AG04449 (cell line): ENCODE measurements at regions of chr16 and their contacts with region 1.

Region 1: GRCh38 chr16:73064205-73064988 is 16.5 kb upstream of the ZFHX3 start:
- DNase-seq: peak; percentile 51
- H3K4me3 ChIP-seq: peak overlapping the region; percentile 42
- CTCF ChIP-seq: no peak

Region 2: DNA sequence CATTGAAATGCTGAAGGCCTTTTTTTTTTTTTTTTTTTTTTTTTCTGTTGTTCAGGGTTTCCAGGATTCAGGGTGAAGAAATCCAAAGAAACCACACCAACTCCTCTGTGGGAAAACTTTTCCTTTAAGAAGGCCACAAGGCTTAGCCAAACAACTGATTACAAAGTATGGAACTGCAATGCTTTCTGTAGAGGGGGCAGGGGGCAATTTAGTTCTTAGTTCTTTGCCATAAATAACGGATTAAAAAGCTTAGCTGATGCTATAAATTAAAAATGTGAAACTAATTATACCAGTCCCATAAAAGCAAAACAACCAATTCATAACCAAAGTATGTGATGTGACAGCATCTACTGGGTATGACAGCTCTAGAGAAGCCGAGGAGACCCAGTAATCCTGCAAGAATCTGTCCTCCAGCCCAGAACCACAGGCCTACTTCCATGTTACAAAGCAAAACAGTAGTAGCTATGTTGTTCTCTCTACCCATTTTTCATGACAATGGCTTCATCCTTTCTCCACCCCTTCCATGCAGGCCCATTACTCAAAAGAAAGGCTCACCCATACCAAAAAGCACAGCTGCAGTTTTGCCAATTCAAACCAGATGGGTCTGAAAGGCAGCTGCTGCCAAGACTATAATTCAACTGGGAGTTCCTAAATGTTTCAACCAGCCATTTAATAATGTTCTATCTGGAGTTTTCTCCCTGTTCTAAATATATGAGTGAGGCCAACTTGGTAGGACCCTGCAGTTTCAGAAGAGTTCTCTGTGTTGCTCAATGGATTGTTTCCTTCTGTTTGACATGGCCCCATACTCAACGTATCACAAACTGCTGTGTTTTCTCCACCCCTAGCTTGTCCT is 150.7 kb after region 1 on chr16:
- CTCF ChIA-PET with region 1: interaction called, 4 read pairs
- POLR2A ChIA-PET with region 1: interaction called, 11 read pairs
- DNase-seq: peak; percentile 98
- H3K4me3 ChIP-seq: no peak overlapping the region
- CTCF ChIP-seq: no peak